Kidney (tissue), 22 donors: ENCODE measurements at regions of chrX and their contacts with region 1.

Region 1: DNA sequence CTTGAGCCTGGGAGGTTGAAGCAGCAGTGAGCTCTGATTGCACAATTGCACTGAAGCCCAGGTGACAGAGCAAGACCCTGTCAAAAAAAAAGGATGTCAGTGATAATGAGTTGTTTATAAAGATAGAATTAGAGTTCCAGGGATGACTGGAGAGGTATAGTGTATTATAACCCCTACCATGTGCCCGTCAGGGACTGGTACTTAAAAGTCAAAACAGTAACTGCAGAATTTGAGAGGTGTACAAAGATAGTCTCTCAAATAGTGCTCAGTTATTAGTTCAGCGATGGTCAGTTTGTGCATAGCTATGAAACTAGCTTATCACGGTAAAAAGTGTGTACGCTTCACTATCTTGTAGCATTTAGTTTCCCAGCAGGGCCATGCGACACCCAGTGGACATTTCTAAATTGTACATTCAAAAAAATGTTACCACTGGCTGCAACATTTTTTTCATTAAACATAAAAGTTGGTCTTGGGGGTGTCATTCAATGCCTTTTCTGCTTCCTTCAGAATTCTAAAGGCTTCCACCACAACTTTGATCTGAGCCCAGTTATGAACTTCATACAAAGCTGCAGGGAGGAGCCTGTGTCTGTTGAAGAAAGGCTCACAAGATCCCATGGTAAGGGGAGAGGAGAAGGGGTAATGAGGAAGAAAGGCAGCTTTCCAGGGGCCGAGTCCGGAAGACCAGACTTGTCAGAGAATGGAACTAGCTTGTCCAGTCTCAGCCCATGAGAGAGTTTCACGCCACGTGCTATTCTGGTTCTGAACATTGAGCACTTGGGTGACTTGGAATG is 9.2 kb upstream of the GYG2 start:
- DNase-seq: no peak
- H3K4me3 ChIP-seq: no peak overlapping the region
- H3K27ac ChIP-seq: no peak overlapping the region
- H3K4me1 ChIP-seq: no peaks in the 10 kb centered on the region
- H3K27me3 ChIP-seq: no peaks in the 10 kb centered on the region
- CTCF ChIP-seq: no peak

Region 2: GRCh38 chrX:2640275-2641150 is 179.0 kb before region 1 on chrX:
- intact Hi-C with region 1: loop called (anchors 10 kb)
- DNase-seq: no peak
- H3K4me3 ChIP-seq: no peak overlapping the region
- H3K27ac ChIP-seq: no peak overlapping the region
- H3K4me1 ChIP-seq: no peaks in the 10 kb centered on the region
- H3K27me3 ChIP-seq: no peaks in the 10 kb centered on the region
- CTCF ChIP-seq: no peak

Region 3: GRCh38 chrX:3219667-3220066 is 400.1 kb after region 1 on chrX:
- intact Hi-C with region 1: no loop called
- DNase-seq: no peak
- H3K4me3 ChIP-seq: no peak overlapping the region
- H3K27ac ChIP-seq: no peak overlapping the region
- H3K4me1 ChIP-seq: no peaks in the 10 kb centered on the region
- H3K27me3 ChIP-seq: no peaks in the 10 kb centered on the region
- CTCF ChIP-seq: no peak

Region 4: GRCh38 chrX:3771766-3772165 is 952.2 kb after region 1 on chrX:
- intact Hi-C with region 1: no loop called
- DNase-seq: no peak
- H3K4me3 ChIP-seq: no peak overlapping the region
- H3K27ac ChIP-seq: no peak overlapping the region
- H3K4me1 ChIP-seq: no peaks in the 10 kb centered on the region
- H3K27me3 ChIP-seq: no peaks in the 10 kb centered on the region
- CTCF ChIP-seq: no peak